IMR-90 (cell line): ENCODE measurements at regions of chr5 and their contacts with region 1.

Region 1: DNA sequence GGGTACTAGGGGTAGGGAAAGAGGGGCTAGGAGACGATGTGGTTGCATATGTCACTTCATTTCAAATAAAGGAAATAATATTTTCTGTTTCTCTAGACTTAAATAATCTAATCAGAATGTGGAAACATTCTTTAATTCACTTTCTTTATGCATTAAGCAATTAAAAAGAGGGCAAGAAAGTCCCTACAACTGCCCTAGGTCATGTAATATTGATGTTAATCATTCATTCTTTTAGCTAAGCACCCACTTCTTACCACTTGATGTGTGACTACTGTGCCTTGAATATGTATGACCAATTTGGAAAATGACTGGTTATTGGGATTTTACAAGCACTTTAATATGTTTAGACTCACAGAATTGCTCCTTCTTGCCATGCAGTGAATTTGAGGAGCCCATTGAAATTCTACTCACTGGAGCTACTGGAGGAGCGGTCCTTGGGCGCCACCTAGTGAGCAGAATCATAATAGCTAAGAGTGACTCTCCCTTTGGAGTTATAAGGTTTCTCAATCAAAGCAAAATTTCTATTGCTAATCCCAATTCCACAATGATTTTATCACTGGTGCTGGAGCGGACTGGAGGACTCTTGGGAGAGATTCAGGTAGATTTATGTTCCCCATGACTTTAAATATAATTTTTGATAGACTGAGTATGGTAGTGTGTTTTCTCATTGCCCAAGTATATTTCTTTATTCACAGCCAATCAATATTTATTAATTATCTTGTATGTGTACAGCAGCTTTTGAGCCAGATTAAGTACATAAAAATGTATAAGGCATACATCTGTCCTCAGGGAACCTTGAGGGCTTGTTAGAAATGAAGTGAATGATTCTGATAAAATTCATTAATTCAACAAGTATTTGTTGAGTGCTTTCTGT is 225.1 kb downstream of the ADGRV1 start:
- DNase-seq: peak; percentile 51
- ATAC-seq: peak; percentile 95
- H3K4me3 ChIP-seq: no peak overlapping the region
- H3K27ac ChIP-seq: no peak overlapping the region
- H3K4me1 ChIP-seq: no peaks in the 10 kb centered on the region
- H3K27me3 ChIP-seq: no peaks in the 10 kb centered on the region
- CTCF ChIP-seq: peak; percentile 87
- POLR2A ChIP-seq: no peak
- RAD21 ChIP-seq: peak; percentile 86

Region 2: GRCh38 chr5:89703817-89704216 is 1079.9 kb before region 1 on chr5:
- CTCF ChIA-PET with region 1: no interaction called
- POLR2A ChIA-PET with region 1: no interaction called
- dilution Hi-C with region 1: no loop called
- in situ Hi-C with region 1: no loop called
- intact Hi-C with region 1: no loop called
- DNase-seq: no peak
- ATAC-seq: no peak
- H3K4me3 ChIP-seq: no peak overlapping the region
- H3K27ac ChIP-seq: no peak overlapping the region
- H3K4me1 ChIP-seq: no peaks in the 10 kb centered on the region
- H3K27me3 ChIP-seq: no peaks in the 10 kb centered on the region
- CTCF ChIP-seq: no peak
- POLR2A ChIP-seq: no peak
- RAD21 ChIP-seq: no peak

Region 3: DNA sequence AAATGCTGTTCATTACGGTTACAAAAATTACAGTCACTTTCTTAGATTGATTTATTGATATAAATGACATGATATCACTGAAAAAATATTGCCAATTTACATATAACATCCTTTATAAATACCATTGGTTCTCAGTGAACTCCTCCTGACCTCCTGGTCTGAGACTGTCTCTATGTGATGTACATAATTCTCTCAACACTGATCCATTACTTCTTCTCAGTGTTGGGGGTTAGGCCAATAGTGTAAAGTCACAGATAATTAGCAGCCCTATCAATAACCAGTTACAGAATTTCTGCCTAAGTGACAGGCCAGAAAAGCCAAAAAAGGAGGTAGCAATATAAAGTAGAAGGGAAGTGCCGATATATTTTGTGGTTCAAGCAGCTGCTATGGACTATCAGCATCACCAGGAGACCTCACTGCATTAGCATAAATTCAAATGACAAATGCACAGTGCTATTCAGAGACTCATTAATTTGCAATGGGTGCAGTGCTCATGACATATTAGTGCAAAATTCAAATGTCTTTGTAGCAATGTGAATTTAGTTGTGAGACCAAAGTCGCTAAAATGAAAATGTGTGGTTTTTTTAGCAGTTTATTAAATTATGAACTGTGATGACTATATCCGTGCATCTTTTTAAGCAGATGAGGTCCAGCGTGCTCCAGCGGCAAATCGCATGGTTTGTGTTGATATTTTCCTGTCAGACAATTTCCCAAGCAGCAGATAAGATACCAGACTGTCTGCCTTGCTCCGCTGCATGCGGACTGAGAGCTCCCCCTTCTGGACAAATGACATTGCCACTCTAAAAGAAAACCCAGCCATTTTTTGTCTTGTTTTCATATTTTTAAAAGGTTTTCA is 518.8 kb before region 1 on chr5:
- CTCF ChIA-PET with region 1: no interaction called
- POLR2A ChIA-PET with region 1: no interaction called
- dilution Hi-C with region 1: no loop called
- in situ Hi-C with region 1: no loop called
- intact Hi-C with region 1: loop called (anchors 10 kb)
- DNase-seq: peak; percentile 61
- ATAC-seq: peak; percentile 83
- H3K4me3 ChIP-seq: no peak overlapping the region
- H3K27ac ChIP-seq: no peak overlapping the region
- H3K4me1 ChIP-seq: no peaks in the 10 kb centered on the region
- H3K27me3 ChIP-seq: no peaks in the 10 kb centered on the region
- CTCF ChIP-seq: peak; percentile 98
- POLR2A ChIP-seq: 0 out of 2 replicates have a peak, but pooled peaks have one; percentile 29
- RAD21 ChIP-seq: peak; percentile 90

Region 4: GRCh38 chr5:90709323-90710155 is 74.2 kb before region 1 on chr5:
- CTCF ChIA-PET with region 1: interaction called, 7 read pairs
- POLR2A ChIA-PET with region 1: no interaction called
- dilution Hi-C with region 1: no loop called
- in situ Hi-C with region 1: no loop called
- intact Hi-C with region 1: loop called (anchors 1 kb)
- DNase-seq: peak; percentile 25
- ATAC-seq: peak; percentile 75
- H3K4me3 ChIP-seq: no peak overlapping the region
- H3K27ac ChIP-seq: no peak overlapping the region
- H3K4me1 ChIP-seq: no peaks in the 10 kb centered on the region
- H3K27me3 ChIP-seq: no peaks in the 10 kb centered on the region
- CTCF ChIP-seq: peak; percentile 49
- POLR2A ChIP-seq: no peak
- RAD21 ChIP-seq: peak; percentile 26; the same call in 1 of the 2 replicates

Region 5: GRCh38 chr5:90830058-90830457 is 46.4 kb after region 1 on chr5:
- CTCF ChIA-PET with region 1: no interaction called
- POLR2A ChIA-PET with region 1: no interaction called
- dilution Hi-C with region 1: no loop called
- in situ Hi-C with region 1: no loop called
- intact Hi-C with region 1: no loop called
- DNase-seq: no peak
- ATAC-seq: no peak
- H3K4me3 ChIP-seq: no peak overlapping the region
- H3K27ac ChIP-seq: no peak overlapping the region
- H3K4me1 ChIP-seq: no peaks in the 10 kb centered on the region
- H3K27me3 ChIP-seq: no peaks in the 10 kb centered on the region
- CTCF ChIP-seq: no peak
- POLR2A ChIP-seq: no peak
- RAD21 ChIP-seq: no peak

Region 6: DNA sequence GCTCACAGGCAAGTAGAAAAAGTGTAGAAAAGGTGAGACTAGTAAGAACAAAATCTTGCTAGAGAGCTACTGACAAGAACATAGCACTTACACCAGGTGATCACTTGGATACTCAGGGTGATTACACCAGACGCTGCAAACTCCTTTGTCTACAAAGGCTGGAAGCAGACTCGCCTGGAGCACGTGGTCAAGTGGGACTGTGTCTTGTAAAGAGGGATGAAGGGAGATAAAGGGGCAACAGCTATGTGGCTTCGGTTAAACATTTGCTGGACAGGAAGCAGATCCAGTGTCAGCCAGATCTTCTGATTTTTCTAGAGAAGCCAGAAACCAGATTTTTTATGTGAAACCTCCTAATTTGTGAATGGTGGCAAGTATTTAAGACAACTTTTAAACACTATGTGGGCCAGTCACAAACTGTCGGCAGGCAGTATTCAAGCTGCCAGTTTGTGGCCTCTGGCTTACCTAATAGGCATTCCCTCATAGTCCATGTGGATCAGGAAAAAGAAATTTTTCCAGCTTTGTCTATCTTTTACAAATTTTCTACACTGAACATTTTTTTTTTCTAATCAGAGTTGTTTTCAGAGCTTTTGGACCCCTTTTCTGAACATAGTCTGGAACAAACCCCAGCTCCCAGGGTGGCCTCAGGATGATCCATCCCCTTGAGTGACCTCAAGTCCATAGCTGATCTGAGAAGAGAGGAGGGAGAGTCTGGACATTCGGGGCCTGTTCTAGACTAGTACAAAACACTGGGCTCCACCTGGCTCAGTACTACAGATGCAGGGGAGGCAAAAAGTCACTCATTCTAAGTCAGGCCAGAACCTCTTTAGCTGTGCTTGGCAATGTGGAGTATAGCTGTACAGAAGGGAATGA is 336.5 kb after region 1 on chr5:
- CTCF ChIA-PET with region 1: no interaction called
- POLR2A ChIA-PET with region 1: no interaction called
- dilution Hi-C with region 1: no loop called
- in situ Hi-C with region 1: no loop called
- intact Hi-C with region 1: no loop called
- DNase-seq: no peak
- ATAC-seq: no peak
- H3K4me3 ChIP-seq: no peak overlapping the region
- H3K27ac ChIP-seq: no peak overlapping the region
- H3K4me1 ChIP-seq: peaks cover 5% of the 10 kb centered on the region
- H3K27me3 ChIP-seq: no peaks in the 10 kb centered on the region
- CTCF ChIP-seq: no peak
- POLR2A ChIP-seq: no peak
- RAD21 ChIP-seq: no peak

Region 7: GRCh38 chr5:91225848-91226686 is 442.4 kb after region 1 on chr5:
- CTCF ChIA-PET with region 1: no interaction called
- POLR2A ChIA-PET with region 1: no interaction called
- dilution Hi-C with region 1: no loop called
- in situ Hi-C with region 1: no loop called
- intact Hi-C with region 1: no loop called
- DNase-seq: no peak
- ATAC-seq: no peak
- H3K4me3 ChIP-seq: no peak overlapping the region
- H3K27ac ChIP-seq: no peak overlapping the region
- H3K4me1 ChIP-seq: no peaks in the 10 kb centered on the region
- H3K27me3 ChIP-seq: no peaks in the 10 kb centered on the region
- CTCF ChIP-seq: 0 out of 2 replicates have a peak, but pooled peaks have one; percentile 10
- POLR2A ChIP-seq: no peak
- RAD21 ChIP-seq: peak; percentile 34; the same call in 1 of the 2 replicates